ENCODE measurements at regions of chr5 and their contacts with region 1.

Region 1: DNA sequence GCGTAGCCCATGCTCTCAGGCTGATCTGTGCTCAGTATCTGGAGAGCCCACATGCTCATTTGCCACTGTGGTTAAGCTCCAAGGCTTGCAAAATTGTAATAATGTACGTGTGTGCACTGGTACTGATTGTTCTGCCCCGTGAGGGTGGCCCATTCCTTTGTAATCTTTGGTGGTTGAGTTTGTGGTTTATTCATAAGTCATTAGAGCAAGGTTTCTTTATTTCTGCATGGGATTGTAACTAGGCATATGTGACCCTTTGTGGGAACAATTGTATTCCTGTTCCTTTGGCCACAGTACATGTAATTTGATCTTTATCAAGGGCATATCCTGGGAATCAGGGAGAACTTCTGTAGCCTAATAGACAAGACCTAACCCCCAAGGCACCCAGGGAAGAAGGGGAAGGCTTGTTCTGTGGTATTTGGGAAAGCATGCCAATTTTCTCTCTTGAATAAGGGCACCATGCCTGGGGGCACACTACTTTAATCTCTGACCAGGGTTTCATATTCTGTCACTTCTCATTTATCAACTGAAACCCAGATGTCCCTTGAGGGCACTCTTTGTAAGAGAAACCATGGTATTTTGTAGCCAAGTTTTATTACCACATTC is 74.6 kb downstream of the NPR3 start:
- DNase-seq: peak; percentile 91 to 96
- H3K4me3 ChIP-seq: peak overlapping the region; percentile 25; the same call in 1 of the 2 replicates
- H3K27ac ChIP-seq: peak overlapping the region; percentile 77
- H3K4me1 ChIP-seq: peaks cover 28% of the 10 kb centered on the region
- H3K27me3 ChIP-seq: peaks cover 45% of the 10 kb centered on the region
- CTCF ChIP-seq: no peak

Region 2: DNA sequence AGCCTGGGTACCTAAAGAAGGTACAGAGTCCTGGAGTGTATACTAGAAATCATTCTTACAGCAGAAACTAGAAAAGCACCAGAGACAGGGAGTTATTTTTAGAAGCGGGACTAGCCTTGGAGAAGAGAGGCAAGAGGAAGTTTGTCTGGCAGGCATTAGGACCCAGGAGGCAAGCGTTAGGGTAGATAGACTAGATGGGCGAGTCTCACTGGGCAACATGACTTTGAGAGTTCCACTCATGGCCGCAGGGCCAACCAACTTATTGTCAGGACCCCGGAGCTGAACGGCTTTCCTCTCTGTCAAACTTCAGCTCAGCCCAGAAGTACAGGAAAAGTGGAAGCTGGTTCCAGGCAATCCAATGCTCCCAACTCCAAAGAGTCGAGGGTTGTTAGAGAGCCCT is 108.7 kb before region 1 on chr5:
- CTCF ChIA-PET with region 1: no interaction called
- POLR2A ChIA-PET with region 1: no interaction called
- intact Hi-C with region 1: no loop called
- DNase-seq: no peak
- H3K4me3 ChIP-seq: no peak overlapping the region
- H3K27ac ChIP-seq: no peak overlapping the region
- H3K4me1 ChIP-seq: no peaks in the 10 kb centered on the region; the same call in 1 of the 2 replicates
- H3K27me3 ChIP-seq: no peaks in the 10 kb centered on the region
- CTCF ChIP-seq: no peak

Region 3: GRCh38 chr5:32760091-32760509 is 25.6 kb before region 1 on chr5:
- CTCF ChIA-PET with region 1: no interaction called
- POLR2A ChIA-PET with region 1: interaction called, 3 read pairs
- intact Hi-C with region 1: loop called (anchors 1 kb)
- DNase-seq: peak; percentile 38 to 73
- H3K4me3 ChIP-seq: peak overlapping the region; percentile 23; the same call in 1 of the 2 replicates
- H3K27ac ChIP-seq: peak overlapping the region; percentile 53
- H3K4me1 ChIP-seq: peaks cover 17% of the 10 kb centered on the region
- H3K27me3 ChIP-seq: no peaks in the 10 kb centered on the region
- CTCF ChIP-seq: no peak

Region 4: GRCh38 chr5:32842813-32843530 is 57.3 kb after region 1 on chr5:
- CTCF ChIA-PET with region 1: no interaction called
- POLR2A ChIA-PET with region 1: no interaction called
- intact Hi-C with region 1: loop called (anchors 1 kb)
- DNase-seq: peak; percentile 58 to 92
- H3K4me3 ChIP-seq: no peak overlapping the region
- H3K27ac ChIP-seq: peak overlapping the region; percentile 6; the same call in 1 of the 2 replicates
- H3K4me1 ChIP-seq: peaks cover 16% of the 10 kb centered on the region
- H3K27me3 ChIP-seq: peaks cover 25% of the 10 kb centered on the region
- CTCF ChIP-seq: no peak

Region 5: GRCh38 chr5:32859211-32859641 is 73.5 kb after region 1 on chr5:
- CTCF ChIA-PET with region 1: no interaction called
- POLR2A ChIA-PET with region 1: no interaction called
- intact Hi-C with region 1: no loop called
- DNase-seq: no peak
- H3K4me3 ChIP-seq: no peak overlapping the region
- H3K27ac ChIP-seq: no peak overlapping the region
- H3K4me1 ChIP-seq: no peaks in the 10 kb centered on the region
- H3K27me3 ChIP-seq: no peaks in the 10 kb centered on the region
- CTCF ChIP-seq: no peak

Region 6: DNA sequence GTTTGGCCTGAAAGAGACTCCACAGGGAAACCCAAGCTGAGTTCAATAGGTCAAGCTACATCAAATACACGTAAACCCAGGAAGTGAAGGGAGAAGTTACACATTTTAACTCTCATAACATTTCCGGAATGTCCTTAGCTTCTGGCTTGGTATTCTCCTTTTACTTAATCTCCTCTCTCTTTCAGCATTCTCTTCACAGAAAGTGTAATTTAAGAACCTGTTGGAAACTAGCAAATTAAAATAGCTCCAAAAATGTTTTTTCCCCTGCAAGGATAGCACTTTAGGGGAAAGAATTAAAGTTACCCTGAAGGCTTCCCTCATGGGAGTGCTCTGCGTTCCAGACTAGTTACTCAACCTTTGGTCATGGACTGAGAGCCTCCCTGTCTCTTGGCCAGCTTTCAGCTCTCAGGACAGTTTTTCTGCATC is 362.4 kb after region 1 on chr5:
- CTCF ChIA-PET with region 1: no interaction called
- POLR2A ChIA-PET with region 1: no interaction called
- intact Hi-C with region 1: loop called (anchors 1 kb)
- DNase-seq: peak; percentile 73 to 81
- H3K4me3 ChIP-seq: peak overlapping the region; percentile 32; the same call in 1 of the 2 replicates
- H3K27ac ChIP-seq: peak overlapping the region; percentile 81
- H3K4me1 ChIP-seq: peaks cover 31% of the 10 kb centered on the region
- H3K27me3 ChIP-seq: no peaks in the 10 kb centered on the region
- CTCF ChIP-seq: no peak

Measured in PC-9 (cell line).